T-cell (primary cell): ENCODE measurements at regions of chr11 and their contacts with region 1.

Region 1: GRCh38 chr11:122781378-122782195 is 56.7 kb upstream of the CRTAM start:
- DNase-seq: peak; percentile 35 to 83 (median 66)
- ATAC-seq: peak; percentile 83 to 88 (median 86)
- H3K4me3 ChIP-seq: no peak overlapping the region
- H3K4me3 Mint-ChIP-seq: no peak overlapping the region
- H3K27ac ChIP-seq: no peak overlapping the region
- H3K27ac Mint-ChIP-seq: no peak overlapping the region
- H3K4me1 ChIP-seq: peaks cover 0 to 6% of the 10 kb centered on the region in 2 experiments
- H3K4me1 Mint-ChIP-seq: peaks cover 2 to 20% (median 10%) of the 10 kb centered on the region in 3 donors
- H3K27me3 ChIP-seq: no peaks in the 10 kb centered on the region
- H3K27me3 Mint-ChIP-seq: no peaks in the 10 kb centered on the region

Region 2: GRCh38 chr11:122578168-122578825 is 203.3 kb before region 1 on chr11:
- CTCF ChIA-PET with region 1: interaction called in 1 of 2 experiments, 13 read pairs
- POLR2A ChIA-PET with region 1: no interaction called
- DNase-seq: no peak
- ATAC-seq: no peak
- H3K4me3 ChIP-seq: no peak overlapping the region
- H3K4me3 Mint-ChIP-seq: no peak overlapping the region
- H3K27ac ChIP-seq: no peak overlapping the region
- H3K27ac Mint-ChIP-seq: no peak overlapping the region
- H3K4me1 ChIP-seq: peaks cover 6 to 8% of the 10 kb centered on the region in 2 experiments
- H3K4me1 Mint-ChIP-seq: peaks cover 11 to 14% (median 13%) of the 10 kb centered on the region in 3 donors
- H3K27me3 ChIP-seq: no peaks in the 10 kb centered on the region
- H3K27me3 Mint-ChIP-seq: peaks cover 0 to 4% of the 10 kb centered on the region in 2 donors

Region 3: DNA sequence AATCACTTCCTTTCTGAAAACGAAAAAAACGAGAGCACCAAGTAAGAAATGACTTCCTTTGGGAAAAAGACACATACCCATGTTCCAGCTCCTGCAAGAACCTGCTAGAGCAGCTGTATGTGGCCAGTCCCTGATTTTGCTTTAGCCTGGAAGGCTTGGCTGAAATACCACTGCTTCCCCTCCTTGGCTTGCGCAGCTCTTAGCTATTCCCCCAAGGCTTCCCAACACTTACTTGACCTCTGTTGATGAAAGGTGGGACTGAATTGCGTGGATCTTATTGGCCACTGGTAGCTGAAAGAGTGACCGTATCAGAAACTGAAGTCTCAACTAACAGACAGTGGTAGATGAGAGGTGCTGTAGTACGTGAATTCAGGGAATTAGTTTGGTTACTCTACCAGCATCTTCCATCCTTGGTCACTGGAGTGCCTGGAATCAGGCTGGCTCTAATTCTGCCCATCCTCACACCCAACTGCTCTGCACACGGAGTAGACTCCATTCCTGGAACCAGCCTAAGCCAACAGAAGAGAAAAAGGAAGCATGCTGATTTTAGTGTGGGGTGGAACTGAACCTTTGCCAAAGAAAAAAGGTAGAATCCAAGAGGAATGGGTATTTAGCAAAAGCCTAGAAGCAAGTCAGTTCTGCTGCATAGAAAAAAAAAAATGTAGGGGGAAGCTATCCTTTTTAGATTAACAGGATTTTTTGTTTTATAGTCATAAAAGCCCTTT is 17.1 kb before region 1 on chr11:
- CTCF ChIA-PET with region 1: interaction called, 3 to 10 read pairs
- POLR2A ChIA-PET with region 1: no interaction called
- DNase-seq: no peak
- ATAC-seq: no peak
- H3K4me3 ChIP-seq: no peak overlapping the region
- H3K4me3 Mint-ChIP-seq: no peak overlapping the region
- H3K27ac ChIP-seq: no peak overlapping the region
- H3K27ac Mint-ChIP-seq: no peak overlapping the region
- H3K4me1 ChIP-seq: no peaks in the 10 kb centered on the region
- H3K4me1 Mint-ChIP-seq: peaks cover 10 to 22% (median 22%) of the 10 kb centered on the region in 3 donors
- H3K27me3 ChIP-seq: no peaks in the 10 kb centered on the region
- H3K27me3 Mint-ChIP-seq: no peaks in the 10 kb centered on the region